Common myeloid progenitor, CD34-positive (primary cell): ENCODE measurements at regions of chr11 and their contacts with region 1.

Region 1: DNA sequence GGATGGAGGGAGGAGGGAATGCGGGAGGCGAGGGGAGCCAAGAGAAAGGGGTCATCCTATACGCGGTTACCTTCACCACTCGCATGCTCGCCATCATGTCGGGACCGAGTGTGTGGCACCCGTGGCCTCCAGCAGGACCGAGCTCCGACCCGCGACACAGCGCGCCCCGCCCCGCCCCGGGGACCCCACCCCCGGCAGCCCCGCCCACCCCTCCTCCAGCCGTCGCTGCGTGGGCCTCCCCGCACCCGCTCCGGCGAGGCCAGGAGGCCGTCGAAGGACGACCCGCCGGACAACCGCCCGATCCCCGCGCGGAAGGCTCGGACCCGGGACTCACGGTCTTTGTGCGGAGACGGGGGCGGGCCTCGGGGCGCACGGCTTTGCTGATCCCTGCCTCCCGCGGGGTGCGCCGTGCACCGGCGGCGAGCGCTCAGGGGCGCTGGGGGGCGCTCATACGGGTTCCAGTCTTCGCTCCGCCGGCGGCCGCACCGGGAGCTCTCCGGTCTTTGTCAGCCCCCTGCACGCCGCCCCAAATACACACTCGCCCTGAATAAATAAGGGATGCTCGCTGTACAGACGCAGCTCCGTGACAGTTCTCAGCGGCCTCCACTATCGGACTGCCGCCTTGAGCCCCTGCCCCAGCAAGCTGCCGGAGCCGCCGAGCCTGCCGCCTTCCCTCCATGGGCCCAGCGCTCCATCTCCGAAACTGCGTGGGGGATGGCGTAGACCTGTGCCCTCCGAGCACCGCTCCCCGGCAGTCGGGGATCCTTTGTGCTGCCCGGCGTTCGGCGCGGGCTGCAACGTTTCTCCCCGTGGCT is at the start of gene UBE2L6:
- DNase-seq: peak; percentile 54 to 85 (median 66)
- H3K4me3 ChIP-seq: peak within 1 kb of the TSS; percentile 76 to 97 (median 94)
- H3K27ac ChIP-seq: peak within 1 kb of the TSS; percentile 46 to 76
- H3K4me1 ChIP-seq: peaks cover 13 to 62% (median 34%) of the 10 kb centered on the region in 4 experiments
- H3K27me3 ChIP-seq: no peaks in the 10 kb centered on the region

Region 2: GRCh38 chr11:57324886-57325734 is 242.6 kb before region 1 on chr11 and contains the start of gene TNKS1BP1:
- CTCF ChIA-PET with region 1: no interaction called
- POLR2A ChIA-PET with region 1: no interaction called
- DNase-seq: peak; percentile 90 to 95 (median 92)
- H3K4me3 ChIP-seq: peak within 1 kb of the TSS; percentile 56 to 90 (median 74)
- H3K27ac ChIP-seq: peak within 1 kb of the TSS; percentile 58 to 86
- H3K4me1 ChIP-seq: peaks cover 2 to 36% (median 26%) of the 10 kb centered on the region in 4 experiments
- H3K27me3 ChIP-seq: no peaks in the 10 kb centered on the region

Region 3: DNA sequence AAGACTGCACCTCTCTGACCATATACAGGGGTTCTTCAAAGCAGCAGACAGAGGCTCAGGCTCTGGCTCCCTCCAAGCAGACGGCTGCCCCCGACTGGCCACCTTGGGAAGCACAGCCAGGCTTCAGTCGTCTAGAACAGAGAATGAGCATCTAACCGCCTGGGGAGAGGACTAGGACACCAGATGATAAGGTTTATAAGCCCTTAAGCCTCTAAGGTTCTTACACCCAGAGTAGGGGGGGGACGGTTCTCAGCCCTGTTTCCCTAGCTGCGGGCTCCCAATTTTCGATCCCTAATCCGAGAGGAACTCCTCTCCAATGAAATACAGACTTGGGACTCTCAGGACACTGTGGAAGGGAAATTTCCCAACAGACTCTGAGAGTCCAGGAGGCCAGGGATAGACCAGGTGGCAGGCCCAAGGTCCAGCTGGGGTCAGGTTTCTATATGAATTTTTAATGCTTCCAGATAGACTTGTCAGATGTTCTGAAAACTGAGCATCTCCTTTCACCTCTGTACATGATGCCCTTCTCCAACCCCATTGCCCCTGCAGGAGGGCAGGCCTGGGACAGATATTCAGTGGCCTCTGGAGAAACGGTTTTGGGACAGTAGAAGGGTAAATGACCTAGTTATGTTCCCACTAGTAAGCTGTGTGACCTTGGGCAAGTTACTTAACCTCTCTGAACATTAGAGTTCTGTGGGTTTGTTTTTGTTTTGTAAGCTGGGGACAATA is 87.1 kb before region 1 on chr11:
- CTCF ChIA-PET with region 1: no interaction called
- POLR2A ChIA-PET with region 1: no interaction called
- DNase-seq: peak in 2 of 3 donors; percentile 72 to 73
- H3K4me3 ChIP-seq: no peak overlapping the region
- H3K27ac ChIP-seq: no peak overlapping the region
- H3K4me1 ChIP-seq: peaks cover 18 to 62% (median 55%) of the 10 kb centered on the region in 4 experiments
- H3K27me3 ChIP-seq: peaks cover 0 to 4% (median 0%) of the 10 kb centered on the region in 5 experiments

Region 4: DNA sequence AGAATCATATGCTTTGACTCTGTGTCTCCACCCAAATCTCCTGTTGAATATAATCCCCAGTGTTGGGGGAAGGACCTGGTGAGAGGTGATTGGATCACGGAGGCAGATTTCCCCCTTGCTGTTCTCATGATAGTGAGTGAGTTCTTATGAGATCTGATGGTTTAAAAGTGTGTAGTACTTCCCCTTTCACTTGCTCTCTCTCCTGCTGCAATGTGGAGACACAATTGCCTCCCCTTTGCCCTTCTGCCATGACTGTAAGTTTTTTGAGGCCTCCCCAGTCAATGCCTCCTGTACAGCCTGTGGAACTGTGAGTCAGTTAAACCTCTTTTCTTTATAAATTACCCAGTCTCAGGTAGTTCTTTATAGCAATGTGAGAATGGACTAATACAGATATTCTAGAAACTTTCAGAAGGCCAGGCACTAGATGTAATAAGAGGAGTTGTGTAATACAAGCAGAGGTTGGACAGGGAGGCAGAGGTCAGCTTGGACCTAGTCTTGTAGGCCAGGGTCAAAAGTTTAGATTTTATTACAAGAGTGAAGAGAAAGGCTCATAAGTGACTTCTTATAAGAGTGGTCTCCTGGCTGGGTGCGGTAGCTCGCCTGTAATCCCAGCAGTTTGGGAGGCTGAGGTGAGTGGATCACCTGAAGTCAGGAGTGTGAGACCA is 20.5 kb after region 1 on chr11:
- CTCF ChIA-PET with region 1: interaction called, 19 read pairs
- POLR2A ChIA-PET with region 1: no interaction called
- DNase-seq: peak in 2 of 3 donors; percentile 69 to 79
- H3K4me3 ChIP-seq: no peak overlapping the region
- H3K27ac ChIP-seq: no peak overlapping the region
- H3K4me1 ChIP-seq: peaks cover 5 to 31% (median 25%) of the 10 kb centered on the region in 4 experiments
- H3K27me3 ChIP-seq: no peaks in the 10 kb centered on the region

Region 5: GRCh38 chr11:57597916-57598830 is 30.5 kb after region 1 on chr11:
- CTCF ChIA-PET with region 1: interaction called, 22 read pairs
- POLR2A ChIA-PET with region 1: no interaction called
- DNase-seq: peak in 2 of 3 donors; percentile 24 to 31
- H3K4me3 ChIP-seq: peak overlapping the region; percentile 28 to 81 (median 70)
- H3K27ac ChIP-seq: no peak overlapping the region
- H3K4me1 ChIP-seq: peaks cover 0 to 26% (median 24%) of the 10 kb centered on the region in 4 experiments
- H3K27me3 ChIP-seq: no peaks in the 10 kb centered on the region

Region 6: DNA sequence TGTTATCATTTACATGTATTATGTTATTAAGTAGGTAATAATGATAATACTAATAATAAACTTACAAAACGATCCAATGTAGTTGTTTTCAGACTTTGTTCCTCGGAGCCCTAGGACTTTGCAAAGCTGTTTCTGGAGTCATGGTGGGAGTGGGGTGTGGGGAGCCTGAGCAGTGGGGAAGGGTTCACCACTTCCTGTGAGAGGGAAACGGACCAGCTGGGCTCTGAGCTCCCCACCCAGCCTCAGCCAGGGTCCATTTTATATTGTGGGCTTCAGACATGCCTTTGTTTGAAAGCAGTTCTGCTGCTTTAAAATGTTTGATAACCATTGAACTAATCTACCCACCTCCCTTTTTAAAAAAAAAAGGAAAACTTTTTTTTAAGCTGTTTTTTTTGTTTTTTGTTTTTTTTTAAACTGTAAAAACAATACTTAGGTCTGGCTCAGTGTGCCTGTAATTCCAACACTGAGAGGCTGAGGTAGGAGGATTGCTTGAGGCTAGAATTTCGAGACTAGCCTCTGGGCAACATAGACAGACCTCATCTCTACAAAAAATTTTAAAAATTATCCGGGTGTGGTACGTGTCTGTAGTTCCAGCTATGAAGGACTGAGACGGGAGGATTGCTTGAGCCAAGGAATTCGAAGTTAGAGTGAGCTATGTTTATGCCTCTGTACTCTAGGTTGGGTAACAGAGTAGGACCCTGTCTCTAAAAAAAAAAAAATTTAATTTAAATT is 36.7 kb after region 1 on chr11:
- CTCF ChIA-PET with region 1: interaction called, 34 read pairs
- POLR2A ChIA-PET with region 1: no interaction called
- DNase-seq: peak; percentile 48 to 83 (median 73)
- H3K4me3 ChIP-seq: peak overlapping the region in 3 of 7 experiments; percentile 28 to 51 (median 45)
- H3K27ac ChIP-seq: peak overlapping the region in 1 of 2 experiments; percentile 66
- H3K4me1 ChIP-seq: peaks cover 0 to 22% (median 15%) of the 10 kb centered on the region in 4 experiments
- H3K27me3 ChIP-seq: no peaks in the 10 kb centered on the region